Activated CD4-positive, alpha-beta T cell treated with anti-CD3 and anti-CD28 coated beads for 36 hours (primary cell): ENCODE measurements at regions of chr11 and their contacts with region 1.

Region 1: DNA sequence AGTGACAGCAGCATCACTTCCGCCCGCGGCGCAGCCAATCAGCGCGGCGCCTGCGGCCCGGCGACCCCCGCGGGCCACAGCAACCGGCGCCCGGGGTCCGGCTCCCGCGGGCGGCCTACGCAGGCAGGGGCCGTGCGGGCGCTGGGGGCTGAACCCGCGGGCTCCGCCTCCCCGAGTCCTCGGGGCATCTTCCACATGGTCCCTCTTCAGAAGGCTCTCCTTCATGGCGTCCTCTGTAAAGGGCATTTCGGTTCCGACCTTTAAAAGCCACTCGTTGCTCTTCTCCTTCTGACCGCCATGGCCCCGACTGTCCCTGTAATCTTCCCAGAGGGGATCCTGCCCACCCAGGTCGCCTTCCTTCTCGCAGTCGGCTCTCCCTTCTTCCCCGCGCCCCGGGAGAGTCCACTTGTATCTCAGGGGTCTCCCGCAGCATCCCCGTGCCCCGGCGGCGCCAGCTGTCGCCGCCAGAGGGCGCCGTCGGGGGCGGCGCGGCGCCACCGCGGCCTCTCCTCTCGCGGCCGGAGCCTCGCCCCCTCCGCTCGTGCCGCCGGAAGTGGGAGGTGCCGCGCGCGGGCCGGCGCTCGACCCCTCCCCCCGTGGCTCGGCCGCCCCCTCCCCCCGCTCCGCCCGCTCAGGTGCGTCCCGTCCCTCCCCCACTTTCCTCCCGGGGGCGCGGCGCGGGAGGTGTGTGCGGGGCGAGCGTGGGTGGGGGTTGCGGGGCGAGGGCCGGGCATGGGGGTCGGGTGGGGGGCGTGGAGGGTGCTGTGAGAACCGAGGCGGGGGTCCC is at the start of gene RNF214:
- DNase-seq: peak; percentile 86
- ATAC-seq: peak; percentile 74
- H3K4me3 Mint-ChIP-seq: peak within 1 kb of the TSS; percentile 87
- H3K27ac Mint-ChIP-seq: peak within 1 kb of the TSS; percentile 100
- H3K4me1 Mint-ChIP-seq: peaks cover 34% of the 10 kb centered on the region
- H3K27me3 Mint-ChIP-seq: no peaks in the 10 kb centered on the region
- total RNA-seq, gene RNF214: 19.3 to 24.6 TPM

Region 2: GRCh38 chr11:116853461-116854073 is 378.7 kb before region 1 on chr11:
- CTCF ChIA-PET with region 1: interaction called, 6 read pairs
- POLR2A ChIA-PET with region 1: no interaction called
- intact Hi-C with region 1: loop called (anchors 1 kb)
- DNase-seq: peak; percentile 70
- ATAC-seq: peak; percentile 92
- H3K4me3 Mint-ChIP-seq: peak overlapping the region; percentile 51
- H3K27ac Mint-ChIP-seq: peak overlapping the region; percentile 90
- H3K4me1 Mint-ChIP-seq: peaks cover 70% of the 10 kb centered on the region
- H3K27me3 Mint-ChIP-seq: no peaks in the 10 kb centered on the region

Region 3: GRCh38 chr11:117020287-117020686 is 212.0 kb before region 1 on chr11:
- CTCF ChIA-PET with region 1: no interaction called
- POLR2A ChIA-PET with region 1: interaction called, 10 read pairs
- intact Hi-C with region 1: no loop called
- DNase-seq: peak; percentile 62
- ATAC-seq: peak; percentile 14
- H3K4me3 Mint-ChIP-seq: no peak overlapping the region
- H3K27ac Mint-ChIP-seq: no peak overlapping the region
- H3K4me1 Mint-ChIP-seq: peaks cover 60% of the 10 kb centered on the region
- H3K27me3 Mint-ChIP-seq: no peaks in the 10 kb centered on the region

Region 4: GRCh38 chr11:117143871-117144476 is 88.3 kb before region 1 on chr11 and contains the start of gene PAFAH1B2:
- CTCF ChIA-PET with region 1: interaction called, 10 read pairs
- POLR2A ChIA-PET with region 1: interaction called, 5 read pairs
- intact Hi-C with region 1: loop called (anchors 1 to 5 kb)
- DNase-seq: peak; percentile 98
- ATAC-seq: peak; percentile 93
- H3K4me3 Mint-ChIP-seq: peak within 1 kb of the TSS; percentile 99
- H3K27ac Mint-ChIP-seq: peak within 1 kb of the TSS; percentile 94
- H3K4me1 Mint-ChIP-seq: peaks cover 42% of the 10 kb centered on the region
- H3K27me3 Mint-ChIP-seq: peaks cover 3% of the 10 kb centered on the region
- total RNA-seq, gene PAFAH1B2: 44.8 to 57.5 TPM

Region 5: GRCh38 chr11:117199061-117199915 is 33.0 kb before region 1 on chr11 and contains the start of gene TAGLN:
- CTCF ChIA-PET with region 1: no interaction called
- POLR2A ChIA-PET with region 1: no interaction called
- intact Hi-C with region 1: no loop called
- DNase-seq: no peak
- ATAC-seq: peak; percentile 25
- H3K4me3 Mint-ChIP-seq: no peak within 1 kb of the TSS
- H3K27ac Mint-ChIP-seq: no peak within 1 kb of the TSS
- H3K4me1 Mint-ChIP-seq: no peaks in the 10 kb centered on the region
- H3K27me3 Mint-ChIP-seq: no peaks in the 10 kb centered on the region
- total RNA-seq, gene TAGLN: 1.6 to 2.0 TPM

Region 6: GRCh38 chr11:117817368-117818040 is 585.2 kb after region 1 on chr11:
- CTCF ChIA-PET with region 1: no interaction called
- POLR2A ChIA-PET with region 1: no interaction called
- intact Hi-C with region 1: loop called (anchors 2 to 10 kb)
- DNase-seq: peak; percentile 95
- ATAC-seq: peak; percentile 45
- H3K4me3 Mint-ChIP-seq: peak overlapping the region; percentile 49
- H3K27ac Mint-ChIP-seq: peak overlapping the region; percentile 99
- H3K4me1 Mint-ChIP-seq: peaks cover 59% of the 10 kb centered on the region
- H3K27me3 Mint-ChIP-seq: no peaks in the 10 kb centered on the region

Region 7: DNA sequence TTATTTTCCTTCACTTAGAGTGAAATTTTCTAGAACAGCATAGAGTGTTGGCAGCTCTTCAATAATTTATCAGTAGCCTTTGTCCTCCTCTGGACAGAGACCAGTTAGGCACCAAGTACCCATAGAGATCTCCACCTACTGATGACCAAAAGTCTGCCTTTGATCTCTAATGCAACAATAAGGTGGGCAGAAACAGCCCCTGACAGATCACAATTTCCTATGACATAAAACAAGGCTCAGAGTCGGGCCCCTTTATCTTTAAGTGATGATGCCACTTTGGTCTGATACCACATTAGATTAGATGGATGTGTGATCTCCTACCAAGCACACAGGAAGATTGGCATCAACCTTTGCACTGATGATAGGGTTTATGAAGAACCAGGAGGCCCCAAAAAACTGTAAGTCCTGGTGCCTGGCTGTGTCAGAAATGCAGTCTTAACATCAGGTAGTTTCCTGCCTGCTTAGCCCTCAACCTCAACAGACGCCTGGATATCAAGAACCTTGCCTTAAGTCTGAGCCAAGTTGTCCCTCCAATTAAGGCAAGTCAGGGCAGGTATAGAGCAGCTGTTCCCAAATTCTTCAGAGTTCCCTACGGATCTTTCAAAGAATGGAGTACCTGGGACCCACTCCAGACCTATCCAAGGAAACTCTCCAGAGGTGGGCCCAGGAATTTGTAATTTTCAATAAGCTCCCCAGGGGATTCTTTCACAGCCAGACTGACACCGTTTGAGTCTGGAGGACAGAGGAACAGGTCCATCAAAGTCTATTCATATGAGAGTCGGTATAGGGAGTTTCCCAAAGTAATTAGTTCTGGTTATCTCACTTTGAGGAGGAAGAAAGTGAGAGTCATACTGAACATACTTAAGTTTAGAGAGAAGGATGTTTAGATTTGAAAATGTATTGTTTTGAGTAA is 814.0 kb after region 1 on chr11:
- CTCF ChIA-PET with region 1: no interaction called
- POLR2A ChIA-PET with region 1: no interaction called
- intact Hi-C with region 1: loop called in 1 of 2 experiments (anchors 10 kb)
- DNase-seq: peak; percentile 49
- ATAC-seq: peak; percentile 76
- H3K4me3 Mint-ChIP-seq: peak overlapping the region; percentile 25
- H3K27ac Mint-ChIP-seq: peak overlapping the region; percentile 76
- H3K4me1 Mint-ChIP-seq: peaks cover 88% of the 10 kb centered on the region
- H3K27me3 Mint-ChIP-seq: no peaks in the 10 kb centered on the region